Gastrocnemius medialis (tissue), 4 donors: ENCODE measurements at regions of chr4 and their contacts with region 1.

Region 1: GRCh38 chr4:142846729-142847596 is 862 bp upstream of the INPP4B start:
- DNase-seq: peak in 1 of 2 donors; percentile 23
- ATAC-seq: peak; percentile 39 to 50
- H3K4me3 ChIP-seq: peak overlapping the region; percentile 83 to 89 (median 84)
- H3K27ac ChIP-seq: peak overlapping the region; percentile 79 to 85 (median 84)
- H3K4me1 ChIP-seq: peaks cover 4 to 8% of the 10 kb centered on the region in 2 donors
- H3K27me3 ChIP-seq: no peaks in the 10 kb centered on the region
- CTCF ChIP-seq: peak in 4 of 5 experiments; percentile 11 to 36 (median 30)
- POLR2A ChIP-seq: no peak

Region 2: GRCh38 chr4:142120921-142121320 is 726.0 kb before region 1 on chr4:
- in situ Hi-C with region 1: loop called (anchors 10 to 25 kb)
- intact Hi-C with region 1: no loop called
- DNase-seq: no peak
- ATAC-seq: no peak
- H3K4me3 ChIP-seq: no peak overlapping the region
- H3K27ac ChIP-seq: no peak overlapping the region
- H3K4me1 ChIP-seq: no peaks in the 10 kb centered on the region
- H3K27me3 ChIP-seq: no peaks in the 10 kb centered on the region
- CTCF ChIP-seq: no peak
- POLR2A ChIP-seq: no peak

Region 3: GRCh38 chr4:142265536-142265935 is 581.4 kb before region 1 on chr4:
- in situ Hi-C with region 1: no loop called
- intact Hi-C with region 1: loop called (anchors 10 kb)
- DNase-seq: peak; percentile 61 to 69
- ATAC-seq: peak; percentile 98
- H3K4me3 ChIP-seq: peak overlapping the region in 3 of 4 donors; percentile 1 to 19 (median 12)
- H3K27ac ChIP-seq: peak overlapping the region; percentile 78 to 94 (median 86)
- H3K4me1 ChIP-seq: peaks cover 26 to 36% of the 10 kb centered on the region in 2 donors
- H3K27me3 ChIP-seq: no peaks in the 10 kb centered on the region
- CTCF ChIP-seq: no peak
- POLR2A ChIP-seq: no peak

Region 4: DNA sequence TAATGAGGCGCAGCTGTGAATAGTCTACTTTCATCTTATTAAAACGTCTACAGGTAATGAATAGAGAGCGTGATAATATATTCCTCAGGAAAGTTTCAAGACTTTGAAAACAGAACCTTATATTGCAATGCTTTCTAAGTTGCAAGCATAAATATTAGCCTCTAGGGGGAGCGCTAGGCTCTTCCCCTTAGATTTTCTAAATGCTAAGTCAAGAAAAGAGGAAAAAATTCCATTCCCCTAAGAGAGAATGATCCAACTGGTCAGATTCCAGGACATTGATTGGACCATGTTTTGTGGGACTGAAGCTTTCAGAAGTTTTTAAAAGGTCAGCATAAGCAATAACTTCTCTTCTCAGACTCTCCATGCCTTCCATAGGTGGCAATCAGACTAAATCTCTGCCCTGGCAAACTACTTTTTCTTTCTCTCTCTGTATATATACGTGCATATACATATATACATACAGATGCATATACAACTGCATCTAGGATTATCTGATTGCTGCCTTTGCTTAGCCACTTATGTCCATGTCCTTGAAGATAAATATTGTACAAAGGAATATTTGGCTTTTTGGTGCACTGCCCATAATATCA is 493.7 kb before region 1 on chr4:
- in situ Hi-C with region 1: loop called in 3 of 4 experiments (anchors 10 to 25 kb)
- intact Hi-C with region 1: loop called (anchors 2 kb)
- DNase-seq: no peak
- ATAC-seq: peak; percentile 38 to 69
- H3K4me3 ChIP-seq: peak overlapping the region in 3 of 4 donors; percentile 2 to 23 (median 4)
- H3K27ac ChIP-seq: peak overlapping the region; percentile 45 to 75 (median 60)
- H3K4me1 ChIP-seq: peaks cover 36 to 65% of the 10 kb centered on the region in 2 donors
- H3K27me3 ChIP-seq: no peaks in the 10 kb centered on the region
- CTCF ChIP-seq: peak; percentile 66 to 91 (median 76)
- POLR2A ChIP-seq: no peak

Region 5: GRCh38 chr4:142762280-142762679 is 84.7 kb before region 1 on chr4:
- in situ Hi-C with region 1: no loop called
- intact Hi-C with region 1: no loop called
- DNase-seq: no peak
- ATAC-seq: no peak
- H3K4me3 ChIP-seq: no peak overlapping the region
- H3K27ac ChIP-seq: no peak overlapping the region
- H3K4me1 ChIP-seq: peaks cover 0 to 6% of the 10 kb centered on the region in 2 donors
- H3K27me3 ChIP-seq: no peaks in the 10 kb centered on the region
- CTCF ChIP-seq: no peak
- POLR2A ChIP-seq: no peak